IMR-90 (cell line): ENCODE measurements at regions of chr16 and their contacts with region 1.

Region 1: GRCh38 chr16:1929578-1930337 is 11.5 kb upstream of the HS3ST6 start:
- DNase-seq: peak; percentile 72
- ATAC-seq: peak; percentile 99
- H3K4me3 ChIP-seq: peak overlapping the region; percentile 56
- H3K27ac ChIP-seq: peak overlapping the region; percentile 38; the same call in 1 of the 2 replicates
- H3K4me1 ChIP-seq: no peaks in the 10 kb centered on the region
- H3K27me3 ChIP-seq: peaks cover 5% of the 10 kb centered on the region; the same call in 1 of the 2 replicates
- CTCF ChIP-seq: peak; percentile 99
- POLR2A ChIP-seq: no peak
- RAD21 ChIP-seq: peak; percentile 90

Region 2: DNA sequence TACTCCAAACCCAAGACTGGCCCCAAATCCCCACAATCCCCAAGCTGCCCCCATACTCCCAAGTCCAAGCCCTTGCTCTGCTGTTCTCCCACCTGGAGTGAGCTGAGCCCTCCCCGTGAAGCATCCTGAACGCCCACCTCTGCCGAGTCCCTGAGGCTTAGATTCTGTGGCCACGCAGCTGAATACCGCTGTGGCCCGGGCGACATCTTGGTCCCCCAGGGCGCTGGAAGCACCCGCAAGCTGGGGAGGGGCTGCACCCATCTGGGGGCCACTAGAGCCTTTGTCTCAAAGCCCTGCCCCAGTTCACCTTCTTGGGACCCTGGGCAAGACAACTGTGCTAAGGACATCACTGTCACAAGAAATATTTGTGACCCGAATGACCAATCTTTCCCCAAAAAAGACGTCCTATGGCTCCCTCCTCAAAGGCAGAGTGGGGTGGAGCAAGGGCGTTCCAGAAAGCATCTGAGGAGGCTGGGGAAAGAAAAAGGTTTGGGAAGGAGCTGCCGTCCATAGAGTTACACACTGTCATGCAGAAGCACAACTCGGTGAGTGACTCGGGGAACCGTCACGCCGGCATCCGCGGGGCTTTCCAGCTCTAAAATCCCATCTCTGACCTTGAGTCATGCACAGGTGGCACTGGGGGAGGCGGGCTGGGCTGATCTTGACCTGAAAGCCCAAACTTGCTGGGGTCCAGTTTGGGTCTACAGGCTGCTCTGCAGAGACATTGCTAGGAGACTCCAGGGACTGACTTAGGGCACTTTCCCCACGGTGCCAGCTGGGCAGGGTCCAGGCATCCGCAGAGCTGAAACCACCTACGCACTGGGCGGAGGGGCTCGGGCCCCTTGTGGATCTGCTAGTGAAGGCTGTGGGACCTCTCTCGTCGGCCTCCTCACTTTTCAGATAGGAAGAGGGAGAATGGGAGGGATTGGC is 447.6 kb before region 1 on chr16:
- CTCF ChIA-PET with region 1: no interaction called
- POLR2A ChIA-PET with region 1: no interaction called
- dilution Hi-C with region 1: no loop called
- in situ Hi-C with region 1: no loop called
- intact Hi-C with region 1: no loop called
- DNase-seq: peak; percentile 44
- ATAC-seq: no peak
- H3K4me3 ChIP-seq: no peak overlapping the region
- H3K27ac ChIP-seq: no peak overlapping the region
- H3K4me1 ChIP-seq: no peaks in the 10 kb centered on the region
- H3K27me3 ChIP-seq: peaks cover 4% of the 10 kb centered on the region; the same call in 1 of the 2 replicates
- CTCF ChIP-seq: no peak
- POLR2A ChIP-seq: no peak
- RAD21 ChIP-seq: no peak

Region 3: DNA sequence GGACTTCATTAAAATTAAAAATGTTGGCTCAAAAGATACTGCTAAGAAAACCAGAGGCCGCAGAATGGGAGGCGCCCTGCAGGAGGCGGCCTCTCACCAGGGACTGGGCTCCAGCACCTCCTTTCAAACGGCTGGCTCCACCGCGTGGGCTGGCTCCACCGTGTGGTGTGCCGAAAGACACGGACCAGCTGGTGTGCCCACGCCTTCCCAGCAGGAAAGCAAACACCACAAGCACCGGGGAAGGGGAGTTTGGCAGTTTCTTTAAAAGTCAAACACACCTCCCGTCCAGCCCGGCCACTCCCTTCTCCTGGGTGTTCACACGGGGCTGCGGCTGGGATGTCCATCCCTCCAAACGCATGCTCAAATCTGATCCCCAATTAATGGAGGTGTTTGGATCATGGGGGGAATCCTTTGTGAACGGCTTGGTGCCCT is 117.0 kb before region 1 on chr16:
- CTCF ChIA-PET with region 1: no interaction called
- POLR2A ChIA-PET with region 1: no interaction called
- dilution Hi-C with region 1: no loop called
- in situ Hi-C with region 1: no loop called
- intact Hi-C with region 1: loop called (anchors 1 kb)
- DNase-seq: peak; percentile 85
- ATAC-seq: peak; percentile 100
- H3K4me3 ChIP-seq: no peak overlapping the region
- H3K27ac ChIP-seq: peak overlapping the region; percentile 19; the same call in 1 of the 2 replicates
- H3K4me1 ChIP-seq: peaks cover 4% of the 10 kb centered on the region; the same call in 1 of the 2 replicates
- H3K27me3 ChIP-seq: no peaks in the 10 kb centered on the region
- CTCF ChIP-seq: peak; percentile 87
- POLR2A ChIP-seq: no peak
- RAD21 ChIP-seq: peak; percentile 70

Region 4: DNA sequence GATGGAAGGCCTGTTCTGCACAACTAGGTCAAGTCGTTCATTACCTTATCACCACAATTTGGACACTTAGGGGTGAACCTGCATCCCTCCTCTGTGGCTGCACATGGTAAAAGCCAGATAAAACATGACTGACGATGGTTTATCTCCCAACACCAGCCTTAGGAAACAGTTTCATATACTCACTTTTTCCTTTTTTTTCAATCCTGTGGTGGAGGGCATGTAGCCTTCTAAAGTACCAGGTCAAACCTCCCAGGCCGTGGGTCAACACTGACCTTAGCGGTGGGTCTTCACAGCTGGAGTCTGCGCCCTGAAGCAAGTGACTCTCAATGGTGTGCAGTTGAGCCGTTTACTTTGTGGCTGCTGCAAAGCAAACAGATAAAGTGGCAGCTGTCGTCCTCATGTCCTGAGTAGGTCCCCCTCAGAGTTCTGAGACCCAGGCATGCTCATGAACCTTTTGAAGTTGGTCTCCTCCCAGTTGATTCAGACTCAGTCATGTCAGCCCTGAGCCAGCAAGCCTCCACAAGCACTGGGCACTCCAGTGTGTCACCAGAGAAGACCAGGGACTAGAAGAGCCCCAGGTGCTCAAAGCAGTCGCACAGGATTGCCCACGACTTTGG is 96.8 kb before region 1 on chr16:
- CTCF ChIA-PET with region 1: no interaction called
- POLR2A ChIA-PET with region 1: no interaction called
- dilution Hi-C with region 1: no loop called
- in situ Hi-C with region 1: no loop called
- intact Hi-C with region 1: no loop called
- DNase-seq: no peak
- ATAC-seq: no peak
- H3K4me3 ChIP-seq: no peak overlapping the region
- H3K27ac ChIP-seq: no peak overlapping the region
- H3K4me1 ChIP-seq: peaks cover 2% of the 10 kb centered on the region; the same call in 1 of the 2 replicates
- H3K27me3 ChIP-seq: no peaks in the 10 kb centered on the region
- CTCF ChIP-seq: no peak
- POLR2A ChIP-seq: no peak
- RAD21 ChIP-seq: no peak

Region 5: GRCh38 chr16:1863681-1864460 is 65.9 kb before region 1 on chr16:
- CTCF ChIA-PET with region 1: interaction called, 6 read pairs
- POLR2A ChIA-PET with region 1: no interaction called
- dilution Hi-C with region 1: no loop called
- in situ Hi-C with region 1: loop called (anchors 5 kb)
- intact Hi-C with region 1: loop called (anchors 1 kb)
- DNase-seq: peak; percentile 44
- ATAC-seq: peak; percentile 48; the same call in 1 of the 2 replicates
- H3K4me3 ChIP-seq: no peak overlapping the region
- H3K27ac ChIP-seq: no peak overlapping the region
- H3K4me1 ChIP-seq: no peaks in the 10 kb centered on the region
- H3K27me3 ChIP-seq: peaks cover 31% of the 10 kb centered on the region
- CTCF ChIP-seq: peak; percentile 60
- POLR2A ChIP-seq: no peak
- RAD21 ChIP-seq: peak; percentile 57

Region 6: DNA sequence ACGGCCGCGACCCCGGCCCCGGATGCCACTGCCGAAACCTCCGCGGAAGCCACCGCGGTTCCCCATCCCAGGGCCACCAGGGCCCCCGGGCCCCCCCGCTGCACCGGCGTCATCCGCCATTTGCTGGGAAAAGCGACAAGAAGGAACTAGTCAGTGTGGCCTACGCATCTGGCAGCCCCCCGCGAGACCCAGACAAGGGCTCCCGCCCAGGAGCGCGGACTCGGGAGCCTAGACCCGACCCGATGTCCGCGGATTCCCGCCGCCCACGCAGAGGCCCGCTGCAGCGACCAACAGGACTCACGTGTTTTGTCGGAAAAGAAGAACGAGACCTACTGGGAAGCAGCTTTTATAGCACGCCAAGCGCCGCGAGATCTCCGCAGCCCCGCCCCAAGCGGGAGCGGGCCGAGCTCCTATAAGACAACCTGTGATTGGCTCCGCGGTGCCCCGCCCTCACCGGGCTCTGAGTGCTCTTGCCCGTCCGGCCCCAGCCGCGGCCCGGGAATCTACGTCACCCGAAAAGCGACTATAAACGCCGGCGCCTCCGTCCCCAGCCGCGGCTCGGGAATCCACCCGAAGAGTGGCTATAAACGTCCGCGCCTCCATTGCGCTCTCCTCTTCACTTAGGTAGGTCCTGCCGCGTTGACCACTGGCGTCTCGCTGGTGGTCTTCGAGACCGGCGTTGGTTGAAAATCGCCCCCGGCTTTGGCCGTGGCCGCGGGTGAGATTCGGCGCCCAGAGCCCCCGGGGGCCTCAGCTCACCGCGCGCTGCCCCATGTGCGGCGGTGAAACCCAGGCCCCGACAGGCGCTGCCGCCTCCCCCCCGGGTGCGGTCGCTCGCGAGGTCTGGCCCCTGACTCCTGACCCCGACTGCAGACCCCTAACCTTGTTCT is 35.0 kb after region 1 on chr16 and contains the start of gene RPS2:
- CTCF ChIA-PET with region 1: no interaction called
- POLR2A ChIA-PET with region 1: no interaction called
- dilution Hi-C with region 1: no loop called
- in situ Hi-C with region 1: no loop called
- intact Hi-C with region 1: no loop called
- DNase-seq: peak; percentile 98
- ATAC-seq: peak; percentile 87
- H3K4me3 ChIP-seq: peak within 1 kb of the TSS; percentile 87
- H3K27ac ChIP-seq: peak within 1 kb of the TSS; percentile 92
- H3K4me1 ChIP-seq: peaks cover 12% of the 10 kb centered on the region
- H3K27me3 ChIP-seq: no peaks in the 10 kb centered on the region
- CTCF ChIP-seq: no peak
- POLR2A ChIP-seq: peak; percentile 100
- RAD21 ChIP-seq: no peak
- total RNA-seq, gene RPS2: 2,703 and 2,852 TPM in 2 replicates